Activated CD8-positive, alpha-beta T cell treated with anti-CD3 and anti-CD28 coated beads, Interleukin-2, amount 10 ng/mL, durations not matched to agents 7 days and 5 days (primary cell): ENCODE measurements at regions of chr18 and their contacts with region 1.

Region 1: GRCh38 chr18:3771121-3771971 is 321.4 kb downstream of the TGIF1 start:
- DNase-seq: peak; percentile 85
- ATAC-seq: peak; percentile 100
- H3K4me3 Mint-ChIP-seq: peak overlapping the region; percentile 28
- H3K27ac Mint-ChIP-seq: no peak overlapping the region
- H3K4me1 Mint-ChIP-seq: peaks cover 11% of the 10 kb centered on the region
- H3K27me3 Mint-ChIP-seq: peaks cover 25% of the 10 kb centered on the region

Region 2: DNA sequence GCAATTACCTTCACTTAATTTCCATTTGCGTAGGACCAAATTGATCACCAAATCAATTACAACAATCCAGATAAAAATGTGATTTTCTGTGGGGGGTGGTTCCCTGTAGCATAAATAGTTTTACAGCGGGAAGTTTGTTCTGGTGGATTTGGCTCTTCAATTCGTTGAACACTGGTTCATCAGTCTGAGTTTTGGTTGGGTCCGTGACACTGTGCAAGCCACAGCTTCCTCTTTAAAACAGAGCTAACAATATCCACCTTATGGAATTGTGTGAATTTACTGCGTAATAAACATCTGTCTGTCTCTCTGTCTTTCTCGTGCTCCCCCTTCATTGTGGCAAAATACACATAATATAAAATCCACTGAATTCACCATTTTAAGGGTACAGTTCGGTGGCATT is 10.6 kb before region 1 on chr18:
- CTCF ChIA-PET with region 1: interaction called, 10 read pairs
- POLR2A ChIA-PET with region 1: no interaction called
- DNase-seq: no peak
- ATAC-seq: no peak
- H3K4me3 Mint-ChIP-seq: no peak overlapping the region
- H3K27ac Mint-ChIP-seq: no peak overlapping the region
- H3K4me1 Mint-ChIP-seq: no peaks in the 10 kb centered on the region
- H3K27me3 Mint-ChIP-seq: no peaks in the 10 kb centered on the region

Region 3: GRCh38 chr18:3869848-3870247 is 98.5 kb after region 1 on chr18:
- CTCF ChIA-PET with region 1: interaction called, 18 read pairs
- POLR2A ChIA-PET with region 1: no interaction called
- DNase-seq: no peak
- ATAC-seq: no peak
- H3K4me3 Mint-ChIP-seq: no peak overlapping the region
- H3K27ac Mint-ChIP-seq: no peak overlapping the region
- H3K4me1 Mint-ChIP-seq: no peaks in the 10 kb centered on the region
- H3K27me3 Mint-ChIP-seq: peaks cover 12% of the 10 kb centered on the region

Region 4: DNA sequence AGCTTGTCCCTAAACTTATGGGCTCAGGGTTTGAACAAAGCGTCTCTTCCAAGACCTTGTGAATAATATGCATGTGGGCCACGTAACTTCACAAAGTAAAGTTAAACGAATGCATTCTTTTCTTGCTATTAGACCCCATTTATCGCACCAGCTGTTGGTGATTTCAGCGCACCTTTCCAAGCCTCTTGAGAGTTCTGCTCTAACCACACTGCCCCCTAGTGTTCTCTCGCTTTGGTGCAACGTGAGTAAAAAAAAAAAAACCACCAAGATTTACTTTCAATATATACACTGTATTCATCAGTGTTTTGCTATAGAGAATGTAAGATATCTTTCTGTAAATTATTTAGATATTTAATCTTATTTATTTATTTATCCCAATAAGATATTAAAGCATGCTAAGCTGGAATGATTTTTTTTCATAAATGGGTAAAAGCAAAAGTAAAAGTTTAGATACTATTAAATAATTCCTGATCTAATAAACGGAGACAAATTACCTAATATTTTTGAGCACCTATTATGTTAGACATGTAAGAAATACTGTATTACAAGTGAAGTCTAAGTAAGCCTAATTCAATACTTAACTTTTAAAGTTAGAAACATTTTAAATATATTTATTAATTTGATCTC is 224.2 kb after region 1 on chr18:
- CTCF ChIA-PET with region 1: interaction called, 71 read pairs
- POLR2A ChIA-PET with region 1: no interaction called
- DNase-seq: peak; percentile 76
- ATAC-seq: peak; percentile 57
- H3K4me3 Mint-ChIP-seq: no peak overlapping the region
- H3K27ac Mint-ChIP-seq: no peak overlapping the region
- H3K4me1 Mint-ChIP-seq: peaks cover 2% of the 10 kb centered on the region
- H3K27me3 Mint-ChIP-seq: peaks cover 11% of the 10 kb centered on the region

Region 5: DNA sequence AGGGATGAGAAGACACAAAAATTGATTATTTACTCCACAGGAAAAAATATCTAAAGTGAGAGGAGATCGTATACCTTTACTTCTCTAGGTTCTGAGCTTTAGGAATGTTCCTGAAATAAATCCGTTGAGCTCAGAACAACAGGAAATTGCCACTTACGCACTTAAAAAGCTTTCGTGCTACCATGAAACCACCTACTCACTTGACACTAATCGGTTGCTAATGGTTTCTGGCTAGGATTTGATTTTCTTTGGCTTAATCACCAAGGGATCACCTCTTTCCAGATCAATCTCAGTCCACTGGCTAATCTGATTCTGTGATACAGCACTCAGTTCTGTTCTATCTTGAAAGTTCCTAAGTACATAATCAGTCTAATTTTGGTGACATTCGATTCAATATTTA is 264.2 kb after region 1 on chr18:
- CTCF ChIA-PET with region 1: no interaction called
- POLR2A ChIA-PET with region 1: no interaction called
- DNase-seq: no peak
- ATAC-seq: no peak
- H3K4me3 Mint-ChIP-seq: no peak overlapping the region
- H3K27ac Mint-ChIP-seq: no peak overlapping the region
- H3K4me1 Mint-ChIP-seq: no peaks in the 10 kb centered on the region
- H3K27me3 Mint-ChIP-seq: no peaks in the 10 kb centered on the region

Region 6: DNA sequence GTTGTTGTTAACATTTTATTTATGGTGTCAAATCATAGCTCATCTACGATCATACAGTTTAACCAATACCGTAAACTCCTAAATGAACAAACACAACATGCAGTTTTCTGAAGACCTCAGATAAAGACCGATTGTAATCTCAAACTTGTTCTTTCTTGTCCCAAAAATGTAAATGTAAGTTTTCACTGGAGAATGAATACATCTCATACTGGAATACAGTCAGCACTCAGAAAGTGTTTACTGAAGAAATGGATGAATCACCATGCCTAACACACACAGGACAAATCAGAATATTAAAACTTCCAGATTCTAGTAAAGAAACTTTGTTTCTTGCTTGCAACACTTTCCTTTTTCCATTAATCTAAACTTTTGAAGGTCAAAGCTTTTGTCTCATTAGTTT is 303.3 kb after region 1 on chr18:
- CTCF ChIA-PET with region 1: interaction called, 13 read pairs
- POLR2A ChIA-PET with region 1: no interaction called
- DNase-seq: no peak
- ATAC-seq: no peak
- H3K4me3 Mint-ChIP-seq: no peak overlapping the region
- H3K27ac Mint-ChIP-seq: no peak overlapping the region
- H3K4me1 Mint-ChIP-seq: no peaks in the 10 kb centered on the region
- H3K27me3 Mint-ChIP-seq: peaks cover 3% of the 10 kb centered on the region